ENCODE measurements at regions of chr15 and their contacts with region 1.

Region 1: GRCh38 chr15:61871926-61872522 is 188.2 kb downstream of the VPS13C start:
- DNase-seq: peak; percentile 12
- ATAC-seq: peak; percentile 65
- H3K4me3 ChIP-seq: no peak overlapping the region
- H3K27ac ChIP-seq: no peak overlapping the region
- H3K4me1 ChIP-seq: no peaks in the 10 kb centered on the region
- H3K27me3 ChIP-seq: no peaks in the 10 kb centered on the region
- CTCF ChIP-seq: peak; percentile 44 to 73 (median 46); a peak in 5 of 6 replicates
- POLR2A ChIP-seq: no peak
- RAD21 ChIP-seq: peak; percentile 68

Region 2: GRCh38 chr15:61809216-61809615 is 62.8 kb before region 1 on chr15:
- CTCF ChIA-PET with region 1: no interaction called
- POLR2A ChIA-PET with region 1: no interaction called
- RAD21 ChIA-PET with region 1: no interaction called
- intact Hi-C with region 1: no loop called
- DNase-seq: no peak
- ATAC-seq: no peak
- H3K4me3 ChIP-seq: no peak overlapping the region
- H3K27ac ChIP-seq: no peak overlapping the region
- H3K4me1 ChIP-seq: no peaks in the 10 kb centered on the region
- H3K27me3 ChIP-seq: peaks cover 27% of the 10 kb centered on the region; the same call in 1 of the 2 replicates
- CTCF ChIP-seq: no peak
- POLR2A ChIP-seq: no peak
- RAD21 ChIP-seq: no peak

Region 3: GRCh38 chr15:62068071-62068786 is 196.2 kb after region 1 on chr15:
- CTCF ChIA-PET with region 1: no interaction called
- POLR2A ChIA-PET with region 1: no interaction called
- RAD21 ChIA-PET with region 1: no interaction called
- intact Hi-C with region 1: loop called (anchors 1 kb)
- DNase-seq: no peak
- ATAC-seq: peak; percentile 76
- H3K4me3 ChIP-seq: peak overlapping the region; percentile 19 to 54
- H3K27ac ChIP-seq: no peak overlapping the region; the same call in 1 of the 2 replicates
- H3K4me1 ChIP-seq: peaks cover 16 to 28% of the 10 kb centered on the region in 2 experiments; a peak in 3 of 4 replicates
- H3K27me3 ChIP-seq: no peaks in the 10 kb centered on the region
- CTCF ChIP-seq: 0 out of 6 replicates have a peak, but pooled peaks of 2 of the 3 experiments have one; percentile 12 to 19
- POLR2A ChIP-seq: no peak
- RAD21 ChIP-seq: 0 out of 2 replicates have a peak, but pooled peaks have one; percentile 20

Region 4: GRCh38 chr15:62138124-62138523 is 266.1 kb after region 1 on chr15:
- CTCF ChIA-PET with region 1: interaction called, 3 read pairs
- POLR2A ChIA-PET with region 1: no interaction called
- RAD21 ChIA-PET with region 1: no interaction called
- intact Hi-C with region 1: loop called (anchors 5 kb)
- DNase-seq: no peak
- ATAC-seq: no peak
- H3K4me3 ChIP-seq: no peak overlapping the region
- H3K27ac ChIP-seq: no peak overlapping the region
- H3K4me1 ChIP-seq: peaks cover 5 to 9% of the 10 kb centered on the region in 2 experiments; a peak in 3 of 4 replicates
- H3K27me3 ChIP-seq: no peaks in the 10 kb centered on the region
- CTCF ChIP-seq: no peak
- POLR2A ChIP-seq: no peak
- RAD21 ChIP-seq: no peak

Region 5: DNA sequence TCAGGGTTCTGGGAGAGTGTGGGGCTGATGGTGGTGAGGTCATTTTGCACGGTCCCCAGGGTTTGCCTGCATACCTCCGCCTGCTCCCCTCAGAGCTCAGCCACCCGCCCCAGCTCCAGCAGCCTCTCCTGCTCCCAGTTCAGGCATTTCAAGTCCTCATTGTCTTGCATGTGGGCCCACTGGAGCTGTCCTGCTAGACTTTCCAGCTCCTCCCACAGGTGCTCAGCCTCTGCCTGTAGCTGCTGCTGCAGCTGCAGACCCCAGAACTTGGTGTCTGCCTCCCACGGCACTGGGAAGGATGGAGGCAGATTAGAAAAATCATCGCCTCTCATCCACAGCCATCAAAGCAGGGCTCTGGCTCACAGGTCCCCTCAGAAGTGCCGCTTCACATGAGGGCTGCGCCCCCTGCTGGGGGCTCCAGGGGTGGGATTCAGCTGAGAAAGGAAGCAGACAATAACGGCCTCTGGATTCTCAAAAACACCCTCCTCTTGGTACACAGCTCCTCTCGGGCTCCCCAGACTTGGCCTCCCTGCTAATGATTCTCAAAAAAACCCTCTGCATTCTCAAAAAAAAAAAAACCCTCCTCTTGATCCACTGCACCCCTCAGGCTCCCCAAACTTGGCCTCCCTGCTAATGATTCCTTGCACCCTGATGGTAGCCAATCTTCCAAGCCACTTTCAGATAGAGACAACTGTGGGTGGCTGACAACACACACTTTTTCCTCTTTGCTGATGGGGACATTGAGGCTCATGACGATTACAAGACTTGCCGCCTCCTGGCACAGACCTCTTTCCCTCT is 382.3 kb after region 1 on chr15:
- CTCF ChIA-PET with region 1: interaction called, 7 read pairs
- POLR2A ChIA-PET with region 1: no interaction called
- RAD21 ChIA-PET with region 1: no interaction called
- intact Hi-C with region 1: loop called (anchors 1 kb)
- DNase-seq: peak; percentile 49
- ATAC-seq: peak; percentile 90
- H3K4me3 ChIP-seq: no peak overlapping the region
- H3K27ac ChIP-seq: no peak overlapping the region
- H3K4me1 ChIP-seq: no peaks in the 10 kb centered on the region
- H3K27me3 ChIP-seq: peaks cover 6% of the 10 kb centered on the region; the same call in 1 of the 2 replicates
- CTCF ChIP-seq: peak; percentile 50 to 89 (median 86); a peak in 5 of 6 replicates
- POLR2A ChIP-seq: no peak
- RAD21 ChIP-seq: peak; percentile 58

Region 6: GRCh38 chr15:62306851-62307504 is 435.0 kb after region 1 on chr15:
- CTCF ChIA-PET with region 1: interaction called, 12 read pairs
- POLR2A ChIA-PET with region 1: no interaction called
- RAD21 ChIA-PET with region 1: no interaction called
- intact Hi-C with region 1: loop called (anchors 10 kb)
- DNase-seq: peak; percentile 68
- ATAC-seq: peak; percentile 99
- H3K4me3 ChIP-seq: no peak overlapping the region
- H3K27ac ChIP-seq: no peak overlapping the region
- H3K4me1 ChIP-seq: no peaks in the 10 kb centered on the region
- H3K27me3 ChIP-seq: 0 out of 2 replicates have a peak, but pooled peaks cover 3% of the 10 kb centered on the region
- CTCF ChIP-seq: peak; percentile 55 to 71 (median 58); a peak in 5 of 6 replicates
- POLR2A ChIP-seq: no peak
- RAD21 ChIP-seq: peak; percentile 75

Region 7: DNA sequence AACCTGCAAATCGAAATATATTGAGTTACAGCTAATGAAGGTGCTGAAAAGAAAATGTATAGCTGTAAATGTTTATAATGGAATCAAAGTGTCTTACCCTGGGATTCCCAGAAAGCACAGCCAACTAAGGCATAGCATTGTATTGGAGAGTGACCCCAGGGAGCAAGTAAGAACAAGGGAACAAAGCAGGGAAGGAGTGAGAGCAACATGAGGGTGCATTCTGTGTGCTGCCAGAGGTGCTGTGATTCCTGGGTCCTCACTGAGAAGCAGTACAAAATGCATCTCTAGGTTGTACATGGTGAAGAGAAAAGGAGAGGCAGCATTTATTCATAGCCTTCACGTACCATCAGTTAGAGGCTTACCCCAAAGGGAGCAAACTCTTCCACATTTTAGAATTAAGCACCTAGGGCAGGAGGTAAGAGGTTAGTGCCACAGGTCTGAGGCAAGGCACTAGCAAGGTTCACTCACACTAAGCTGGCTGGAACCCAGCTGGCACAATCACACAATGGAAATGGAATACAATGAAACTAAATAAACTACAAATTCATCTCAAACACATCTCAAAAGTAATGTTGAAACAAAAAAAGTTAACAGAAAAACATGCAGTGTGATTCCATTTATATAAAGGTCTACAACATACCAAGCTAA is 444.5 kb after region 1 on chr15:
- CTCF ChIA-PET with region 1: no interaction called
- POLR2A ChIA-PET with region 1: no interaction called
- RAD21 ChIA-PET with region 1: no interaction called
- intact Hi-C with region 1: loop called (anchors 10 kb)
- DNase-seq: no peak
- ATAC-seq: no peak
- H3K4me3 ChIP-seq: no peak overlapping the region
- H3K27ac ChIP-seq: no peak overlapping the region
- H3K4me1 ChIP-seq: no peaks in the 10 kb centered on the region
- H3K27me3 ChIP-seq: no peaks in the 10 kb centered on the region
- CTCF ChIP-seq: no peak
- POLR2A ChIP-seq: no peak
- RAD21 ChIP-seq: no peak

Measured in HCT116 (cell line).